Ascending aorta (tissue), 2 donors: ENCODE measurements at regions of chr3 and their contacts with region 1.

Region 1: GRCh38 chr3:13895155-13896105 is 15.6 kb upstream of the WNT7A start:
- DNase-seq: peak; percentile 82 to 97
- H3K4me3 ChIP-seq: peak overlapping the region; percentile 56 to 82
- H3K27ac ChIP-seq: peak overlapping the region; percentile 70 to 76
- H3K4me1 ChIP-seq: peaks cover 5% of the 10 kb centered on the region in 2 donors
- H3K27me3 ChIP-seq: no peaks in the 10 kb centered on the region
- CTCF ChIP-seq: no peak

Region 2: DNA sequence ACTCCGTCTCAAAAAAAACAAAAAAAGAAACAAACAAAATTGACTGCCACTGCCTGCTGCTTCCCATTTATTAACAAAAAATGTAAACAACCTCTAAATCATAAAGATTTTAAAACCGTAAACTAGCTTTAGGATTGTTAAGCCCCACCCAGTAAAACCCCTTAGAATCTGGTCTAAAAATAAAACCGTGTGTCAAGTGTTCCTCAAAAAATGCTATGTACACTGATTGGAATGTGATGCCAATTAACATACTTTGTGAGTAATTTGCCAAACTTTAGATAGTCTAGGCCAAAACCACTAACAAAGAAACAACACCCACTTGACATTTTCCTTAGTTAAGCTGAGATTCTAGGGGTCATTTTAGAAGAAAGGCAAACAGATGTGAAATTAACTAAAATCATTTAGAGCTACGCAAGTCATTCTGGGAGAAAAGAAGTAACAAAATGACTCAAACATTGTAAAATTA is 1236.8 kb before region 1 on chr3:
- intact Hi-C with region 1: loop called (anchors 10 kb)
- DNase-seq: no peak
- H3K4me3 ChIP-seq: peak overlapping the region; percentile 9 to 29
- H3K27ac ChIP-seq: peak overlapping the region; percentile 79 to 82
- H3K4me1 ChIP-seq: peaks cover 6 to 42% of the 10 kb centered on the region in 2 donors
- H3K27me3 ChIP-seq: no peaks in the 10 kb centered on the region
- CTCF ChIP-seq: no peak

Region 3: DNA sequence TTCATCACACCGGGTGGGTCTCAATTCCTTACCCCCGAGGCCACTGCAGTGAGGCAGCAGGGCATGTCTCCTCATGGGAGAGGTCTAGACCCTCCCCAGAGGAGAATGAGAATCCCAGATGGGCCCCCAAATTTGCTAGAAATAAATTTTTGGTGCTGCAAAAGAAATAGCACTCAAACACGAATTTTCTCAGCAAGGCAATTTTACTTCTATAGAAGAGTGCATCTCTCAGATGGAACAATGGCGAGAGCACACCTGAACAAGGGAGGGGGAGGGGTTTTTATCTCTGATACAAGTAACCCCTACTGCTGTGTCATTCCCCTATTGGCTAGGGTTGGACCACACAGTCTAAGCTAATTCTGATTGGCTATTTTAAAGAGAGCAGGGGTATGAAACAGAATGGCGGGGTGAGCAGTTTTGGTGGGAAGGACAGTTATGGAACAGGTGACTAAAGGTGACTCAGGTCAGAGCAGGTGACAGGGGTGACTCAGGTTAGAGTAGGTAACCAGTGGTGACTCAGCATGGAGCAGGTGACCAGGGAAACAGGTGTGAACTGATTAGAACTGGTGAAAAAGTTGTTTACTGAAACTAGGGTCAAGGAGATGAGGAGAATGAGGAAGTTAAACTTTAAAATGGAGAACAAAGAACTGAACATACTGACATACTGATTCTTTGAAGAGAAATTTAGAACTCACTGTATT is 77.4 kb after region 1 on chr3:
- intact Hi-C with region 1: no loop called
- DNase-seq: no peak
- H3K4me3 ChIP-seq: no peak overlapping the region
- H3K27ac ChIP-seq: no peak overlapping the region
- H3K4me1 ChIP-seq: no peaks in the 10 kb centered on the region
- H3K27me3 ChIP-seq: no peaks in the 10 kb centered on the region
- CTCF ChIP-seq: no peak

Region 4: DNA sequence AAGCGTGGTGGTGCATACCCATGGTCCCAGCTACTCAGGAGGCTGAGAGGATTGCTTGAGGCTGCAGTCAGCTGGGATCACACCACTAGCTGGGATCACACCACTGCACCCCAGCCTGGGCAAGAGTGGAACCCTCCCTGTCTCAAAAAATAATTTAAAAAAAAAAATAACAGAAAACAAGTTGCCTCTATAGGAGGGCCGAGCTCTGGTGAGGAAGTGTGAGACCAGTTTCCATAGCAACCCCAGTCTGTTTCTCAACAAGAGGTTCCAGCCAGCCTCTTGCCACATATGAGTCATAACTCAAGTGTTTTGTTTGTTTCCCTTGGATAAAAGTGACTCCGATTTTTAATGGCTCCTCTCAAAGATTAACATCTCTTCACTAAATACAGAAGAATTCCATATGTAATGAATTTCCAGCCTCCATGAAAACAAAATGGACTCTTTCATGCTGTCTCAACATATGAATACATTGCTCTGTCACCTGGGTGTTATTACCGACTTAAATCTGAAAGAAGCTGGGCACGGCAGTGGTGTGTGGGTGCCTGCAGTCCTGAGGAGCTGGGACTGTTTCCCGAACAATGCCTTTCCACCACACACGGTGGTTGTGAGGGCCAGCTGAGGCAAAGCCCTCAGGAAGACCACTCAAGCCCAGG is 249.1 kb after region 1 on chr3:
- intact Hi-C with region 1: no loop called
- DNase-seq: peak; percentile 70 to 93
- H3K4me3 ChIP-seq: peak overlapping the region; percentile 33 to 38
- H3K27ac ChIP-seq: peak overlapping the region; percentile 89 to 91
- H3K4me1 ChIP-seq: peaks cover 31 to 49% of the 10 kb centered on the region in 2 donors
- H3K27me3 ChIP-seq: no peaks in the 10 kb centered on the region
- CTCF ChIP-seq: no peak

Region 5: GRCh38 chr3:14178247-14179113 is 283.1 kb after region 1 on chr3 and contains the starts of genes LSM3 and XPC:
- intact Hi-C with region 1: loop called (anchors 1 kb)
- DNase-seq: peak; percentile 92 to 98
- H3K4me3 ChIP-seq: peak within 1 kb of the TSS; percentile 69 to 71
- H3K27ac ChIP-seq: peak within 1 kb of the TSS; percentile 91 to 99
- H3K4me1 ChIP-seq: peaks cover 0 to 31% of the 10 kb centered on the region in 2 donors
- H3K27me3 ChIP-seq: no peaks in the 10 kb centered on the region
- CTCF ChIP-seq: peak in 1 of 3 experiments; percentile 8
- total RNA-seq, gene LSM3: 3.9 TPM
- total RNA-seq, gene XPC: 48.9 TPM

Region 6: DNA sequence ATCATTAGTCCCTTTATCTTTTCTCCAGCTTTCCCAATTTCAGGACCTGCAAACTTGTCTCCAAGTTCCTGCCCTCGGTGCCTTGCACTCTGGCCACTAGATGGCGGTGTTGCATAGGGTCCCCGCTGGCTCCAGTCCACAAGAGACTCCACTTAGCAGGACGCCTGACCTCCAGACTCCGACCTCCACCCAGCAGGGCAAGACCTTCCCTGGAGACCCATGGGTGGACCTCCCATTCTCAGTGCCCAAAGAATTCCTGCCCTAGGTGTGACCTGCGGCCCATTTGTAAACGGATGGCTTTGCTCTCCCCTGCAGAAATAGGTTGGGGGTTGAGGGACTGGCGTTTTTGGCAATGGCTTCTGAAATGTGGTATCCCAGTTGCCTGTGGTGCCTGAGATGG is 365.8 kb after region 1 on chr3:
- intact Hi-C with region 1: loop called (anchors 2 kb)
- DNase-seq: peak; percentile 11 to 88
- H3K4me3 ChIP-seq: no peak overlapping the region
- H3K27ac ChIP-seq: no peak overlapping the region
- H3K4me1 ChIP-seq: no peaks in the 10 kb centered on the region
- H3K27me3 ChIP-seq: no peaks in the 10 kb centered on the region
- CTCF ChIP-seq: peak; percentile 86 to 98 (median 96)

Region 7: GRCh38 chr3:14461748-14462324 is 566.4 kb after region 1 on chr3:
- intact Hi-C with region 1: loop called (anchors 5 kb)
- DNase-seq: no peak
- H3K4me3 ChIP-seq: no peak overlapping the region
- H3K27ac ChIP-seq: no peak overlapping the region
- H3K4me1 ChIP-seq: peaks cover 7 to 18% of the 10 kb centered on the region in 2 donors
- H3K27me3 ChIP-seq: no peaks in the 10 kb centered on the region
- CTCF ChIP-seq: peak; percentile 50 to 66 (median 63)

Region 8: DNA sequence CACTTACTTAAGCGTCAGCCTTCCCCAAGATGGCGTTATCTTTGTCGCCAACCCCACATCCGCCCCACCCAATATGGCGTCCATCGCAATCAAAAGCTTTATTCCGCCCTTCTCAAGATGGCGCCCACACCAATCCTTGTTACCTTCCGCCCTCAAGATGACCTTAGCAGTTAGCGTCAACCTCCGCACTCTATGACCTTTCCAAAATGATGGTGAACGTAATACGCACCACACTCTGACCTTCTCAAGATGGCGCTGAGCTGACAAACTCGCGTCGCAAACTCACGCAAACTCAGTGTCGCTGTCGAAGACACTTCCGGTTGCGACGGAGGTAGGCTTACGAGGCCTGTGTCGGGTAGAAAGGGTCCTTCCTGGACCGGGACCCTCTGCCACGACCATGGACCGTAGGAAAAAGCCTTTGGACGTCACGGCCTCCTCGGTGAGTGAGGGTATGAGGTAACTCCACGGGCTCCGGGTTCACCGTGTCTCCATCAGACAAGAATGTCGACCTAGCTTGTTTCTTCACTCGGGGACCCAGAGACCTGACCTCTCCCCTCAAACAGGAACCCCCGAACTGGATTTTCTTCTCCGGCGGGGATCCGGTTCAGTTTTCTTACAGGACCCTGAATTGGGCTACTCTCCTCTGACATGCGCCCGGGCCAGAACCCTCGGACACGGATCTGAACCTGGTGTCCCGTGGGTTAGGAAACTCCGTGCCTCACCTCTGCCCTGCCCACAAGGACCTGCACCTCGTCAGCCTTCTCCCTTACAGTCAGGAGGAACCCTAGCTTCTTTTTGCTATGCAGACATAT is 756.2 kb after region 1 on chr3 and contains the start of gene CCDC174:
- intact Hi-C with region 1: loop called (anchors 5 kb)
- DNase-seq: peak; percentile 89 to 98
- H3K4me3 ChIP-seq: peak within 1 kb of the TSS; percentile 64 to 80
- H3K27ac ChIP-seq: peak within 1 kb of the TSS; percentile 77 to 91
- H3K4me1 ChIP-seq: peaks cover 7 to 16% of the 10 kb centered on the region in 2 donors
- H3K27me3 ChIP-seq: no peaks in the 10 kb centered on the region
- CTCF ChIP-seq: no peak
- total RNA-seq, gene CCDC174: 5.5 TPM